Activated CD8-positive, alpha-beta T cell treated with anti-CD3 and anti-CD28 coated beads, Interleukin-2, amount 10 ng/mL, durations not matched to agents 7 days and 5 days (primary cell): ENCODE measurements at regions of chr10 and their contacts with region 1.

Region 1: DNA sequence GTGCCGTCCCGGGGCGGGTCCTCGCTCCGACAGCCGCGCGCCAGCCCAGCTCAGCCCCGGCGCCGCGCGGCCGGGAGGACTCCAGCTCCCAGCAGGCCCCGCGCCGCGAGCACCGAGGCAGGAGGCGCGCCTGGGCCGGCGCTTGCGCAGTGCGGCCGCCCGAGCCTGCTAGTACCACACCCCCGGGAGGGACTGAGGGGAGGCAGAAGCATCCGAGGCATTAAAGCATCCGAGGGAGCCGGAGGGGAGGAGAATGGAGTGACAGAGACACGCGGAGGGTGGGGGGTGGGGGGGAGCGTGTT is at the start of gene GRK5:
- DNase-seq: peak; percentile 96
- ATAC-seq: peak; percentile 86
- H3K4me3 Mint-ChIP-seq: peak within 1 kb of the TSS; percentile 89
- H3K27ac Mint-ChIP-seq: peak within 1 kb of the TSS; percentile 97
- H3K4me1 Mint-ChIP-seq: peaks cover 51% of the 10 kb centered on the region
- H3K27me3 Mint-ChIP-seq: no peaks in the 10 kb centered on the region
- total RNA-seq, gene GRK5: 16.9 to 17.6 TPM

Region 2: GRCh38 chr10:118870467-118871243 is 336.7 kb before region 1 on chr10:
- CTCF ChIA-PET with region 1: no interaction called
- POLR2A ChIA-PET with region 1: no interaction called
- DNase-seq: no peak
- ATAC-seq: no peak
- H3K4me3 Mint-ChIP-seq: no peak overlapping the region
- H3K27ac Mint-ChIP-seq: no peak overlapping the region
- H3K4me1 Mint-ChIP-seq: no peaks in the 10 kb centered on the region
- H3K27me3 Mint-ChIP-seq: peaks cover 13% of the 10 kb centered on the region

Region 3: DNA sequence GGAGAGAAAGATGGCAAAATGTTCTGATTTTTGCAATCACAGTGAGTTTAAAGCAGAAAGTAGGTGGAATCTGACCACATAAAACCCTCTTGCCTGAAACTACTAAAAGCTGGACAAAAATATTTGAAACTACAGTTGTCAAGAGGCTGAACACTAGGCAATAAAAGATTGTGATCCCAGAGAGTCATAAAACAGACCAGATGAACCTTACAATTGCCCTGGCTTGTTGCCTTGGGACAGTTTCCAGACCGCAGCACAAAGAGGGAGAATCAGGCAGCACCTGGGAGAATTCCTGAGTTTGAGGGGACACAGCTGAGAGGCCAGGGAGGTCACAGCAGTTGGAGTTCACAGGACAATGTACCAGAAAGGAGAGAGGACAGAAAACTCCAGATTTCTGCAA is 285.1 kb before region 1 on chr10:
- CTCF ChIA-PET with region 1: no interaction called
- POLR2A ChIA-PET with region 1: no interaction called
- DNase-seq: no peak
- ATAC-seq: no peak
- H3K4me3 Mint-ChIP-seq: no peak overlapping the region
- H3K27ac Mint-ChIP-seq: no peak overlapping the region
- H3K4me1 Mint-ChIP-seq: no peaks in the 10 kb centered on the region
- H3K27me3 Mint-ChIP-seq: peaks cover 9% of the 10 kb centered on the region

Region 4: DNA sequence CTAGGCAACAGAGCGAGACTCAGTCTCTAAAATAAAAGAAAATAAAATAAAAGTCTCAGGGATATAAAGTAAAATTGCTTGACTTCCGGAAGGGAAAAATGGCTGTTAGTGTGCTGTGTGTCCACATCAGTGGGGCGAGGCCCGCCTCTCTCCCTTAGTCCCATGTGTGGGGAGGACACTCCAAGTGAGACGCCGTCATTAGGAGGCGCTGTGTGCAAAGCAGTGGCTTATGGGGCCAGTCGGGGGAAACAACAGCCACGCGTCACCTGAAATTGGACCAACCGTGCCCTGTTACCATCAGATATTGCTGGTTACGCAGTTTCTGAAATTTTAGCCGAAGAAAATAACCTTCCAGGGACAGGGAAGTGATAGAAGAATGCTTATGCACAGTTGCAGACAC is 57.6 kb before region 1 on chr10:
- CTCF ChIA-PET with region 1: no interaction called
- POLR2A ChIA-PET with region 1: no interaction called
- DNase-seq: no peak
- ATAC-seq: no peak
- H3K4me3 Mint-ChIP-seq: no peak overlapping the region
- H3K27ac Mint-ChIP-seq: no peak overlapping the region
- H3K4me1 Mint-ChIP-seq: no peaks in the 10 kb centered on the region
- H3K27me3 Mint-ChIP-seq: no peaks in the 10 kb centered on the region

Region 5: DNA sequence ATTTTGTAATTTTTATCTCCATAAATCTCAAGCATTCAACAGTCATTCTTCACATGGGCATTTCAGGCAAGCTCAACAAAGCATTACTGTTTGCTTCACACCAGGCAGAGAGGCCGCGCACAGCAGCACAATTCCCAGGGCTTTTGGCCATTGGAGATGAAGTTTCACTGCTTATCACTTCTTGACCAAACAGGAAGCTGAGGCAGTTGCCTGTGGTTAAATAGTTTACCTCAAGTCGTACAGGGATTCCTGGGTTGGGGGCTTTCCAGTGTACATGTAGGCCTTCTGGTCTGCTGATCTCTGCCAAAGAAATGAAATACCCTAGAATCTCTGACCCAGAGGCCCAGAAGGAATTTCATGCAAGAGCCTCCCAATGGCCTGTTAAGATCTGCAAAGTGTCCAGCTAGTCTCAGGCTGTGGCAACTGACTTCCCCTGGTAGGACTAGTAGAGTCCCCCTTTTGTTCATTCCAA is 17.5 kb before region 1 on chr10:
- CTCF ChIA-PET with region 1: interaction called, 17 read pairs
- POLR2A ChIA-PET with region 1: interaction called, 3 read pairs
- DNase-seq: peak; percentile 40
- ATAC-seq: peak; percentile 33
- H3K4me3 Mint-ChIP-seq: peak overlapping the region; percentile 3
- H3K27ac Mint-ChIP-seq: no peak overlapping the region
- H3K4me1 Mint-ChIP-seq: peaks cover 19% of the 10 kb centered on the region
- H3K27me3 Mint-ChIP-seq: no peaks in the 10 kb centered on the region

Region 6: GRCh38 chr10:119290291-119291048 is 83.2 kb after region 1 on chr10:
- CTCF ChIA-PET with region 1: interaction called, 15 read pairs
- POLR2A ChIA-PET with region 1: interaction called, 4 read pairs
- DNase-seq: no peak
- ATAC-seq: no peak
- H3K4me3 Mint-ChIP-seq: no peak overlapping the region
- H3K27ac Mint-ChIP-seq: no peak overlapping the region
- H3K4me1 Mint-ChIP-seq: peaks cover 65% of the 10 kb centered on the region
- H3K27me3 Mint-ChIP-seq: peaks cover 2% of the 10 kb centered on the region

Region 7: GRCh38 chr10:119416855-119417254 is 209.5 kb after region 1 on chr10:
- CTCF ChIA-PET with region 1: interaction called, 66 read pairs
- POLR2A ChIA-PET with region 1: interaction called, 5 read pairs
- DNase-seq: peak; percentile 78
- ATAC-seq: peak; percentile 89
- H3K4me3 Mint-ChIP-seq: no peak overlapping the region
- H3K27ac Mint-ChIP-seq: no peak overlapping the region
- H3K4me1 Mint-ChIP-seq: no peaks in the 10 kb centered on the region
- H3K27me3 Mint-ChIP-seq: no peaks in the 10 kb centered on the region

Region 8: GRCh38 chr10:119445311-119445934 is 238.1 kb after region 1 on chr10:
- CTCF ChIA-PET with region 1: interaction called, 69 read pairs
- POLR2A ChIA-PET with region 1: interaction called, 4 read pairs
- DNase-seq: peak; percentile 89
- ATAC-seq: peak; percentile 85
- H3K4me3 Mint-ChIP-seq: no peak overlapping the region
- H3K27ac Mint-ChIP-seq: peak overlapping the region; percentile 77
- H3K4me1 Mint-ChIP-seq: peaks cover 20% of the 10 kb centered on the region
- H3K27me3 Mint-ChIP-seq: no peaks in the 10 kb centered on the region

Region 9: GRCh38 chr10:119542988-119543813 is 335.9 kb after region 1 on chr10:
- CTCF ChIA-PET with region 1: interaction called, 18 read pairs
- POLR2A ChIA-PET with region 1: interaction called, 5 read pairs
- DNase-seq: peak; percentile 78
- ATAC-seq: peak; percentile 37
- H3K4me3 Mint-ChIP-seq: peak overlapping the region; percentile 78
- H3K27ac Mint-ChIP-seq: peak overlapping the region; percentile 86
- H3K4me1 Mint-ChIP-seq: peaks cover 38% of the 10 kb centered on the region
- H3K27me3 Mint-ChIP-seq: peaks cover 14% of the 10 kb centered on the region